ENCODE measurements at regions of chr17 and their contacts with region 1.

Region 1: DNA sequence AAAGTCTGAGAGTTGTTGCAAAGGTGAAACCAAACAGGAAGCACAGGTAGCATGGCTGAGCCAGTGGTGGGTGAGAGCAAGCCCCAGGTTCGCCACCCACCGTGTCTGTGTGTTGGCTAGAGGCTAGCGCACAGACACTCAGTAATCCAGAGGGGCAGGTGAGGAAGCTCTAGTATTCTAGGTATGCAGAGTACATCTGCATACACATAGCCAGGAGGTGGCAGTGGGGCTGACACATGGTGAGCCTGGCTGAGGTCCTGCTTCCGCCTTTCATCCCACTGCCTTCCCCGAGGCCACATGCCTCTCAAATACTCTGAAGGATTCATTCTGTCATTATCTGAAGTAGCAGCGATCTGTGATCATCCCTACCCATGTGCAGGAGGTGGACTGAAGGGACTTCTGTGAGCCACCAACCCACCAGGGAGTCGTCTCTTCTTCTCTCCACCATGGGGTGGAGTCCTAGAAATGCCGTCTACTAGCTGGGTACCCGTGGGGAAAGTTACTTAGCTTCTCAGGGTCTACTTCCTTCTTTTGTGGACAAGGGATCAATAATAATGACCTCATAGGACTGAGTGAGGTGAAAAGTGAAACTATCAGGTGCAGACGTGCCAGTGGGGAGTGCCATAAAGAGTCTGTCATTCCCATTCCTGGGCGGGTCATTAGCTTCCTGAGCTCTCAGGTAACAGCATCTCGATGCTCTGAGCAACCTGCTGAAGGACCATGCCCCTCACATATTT is 36.0 kb upstream of the ICAM2 start:
- DNase-seq: peak; percentile 65
- H3K4me3 Mint-ChIP-seq: peak overlapping the region; percentile 24
- H3K27ac Mint-ChIP-seq: peak overlapping the region; percentile 90
- H3K4me1 Mint-ChIP-seq: no peaks in the 10 kb centered on the region
- H3K27me3 Mint-ChIP-seq: no peaks in the 10 kb centered on the region
- CTCF ChIP-seq: peak; percentile 15

Region 2: DNA sequence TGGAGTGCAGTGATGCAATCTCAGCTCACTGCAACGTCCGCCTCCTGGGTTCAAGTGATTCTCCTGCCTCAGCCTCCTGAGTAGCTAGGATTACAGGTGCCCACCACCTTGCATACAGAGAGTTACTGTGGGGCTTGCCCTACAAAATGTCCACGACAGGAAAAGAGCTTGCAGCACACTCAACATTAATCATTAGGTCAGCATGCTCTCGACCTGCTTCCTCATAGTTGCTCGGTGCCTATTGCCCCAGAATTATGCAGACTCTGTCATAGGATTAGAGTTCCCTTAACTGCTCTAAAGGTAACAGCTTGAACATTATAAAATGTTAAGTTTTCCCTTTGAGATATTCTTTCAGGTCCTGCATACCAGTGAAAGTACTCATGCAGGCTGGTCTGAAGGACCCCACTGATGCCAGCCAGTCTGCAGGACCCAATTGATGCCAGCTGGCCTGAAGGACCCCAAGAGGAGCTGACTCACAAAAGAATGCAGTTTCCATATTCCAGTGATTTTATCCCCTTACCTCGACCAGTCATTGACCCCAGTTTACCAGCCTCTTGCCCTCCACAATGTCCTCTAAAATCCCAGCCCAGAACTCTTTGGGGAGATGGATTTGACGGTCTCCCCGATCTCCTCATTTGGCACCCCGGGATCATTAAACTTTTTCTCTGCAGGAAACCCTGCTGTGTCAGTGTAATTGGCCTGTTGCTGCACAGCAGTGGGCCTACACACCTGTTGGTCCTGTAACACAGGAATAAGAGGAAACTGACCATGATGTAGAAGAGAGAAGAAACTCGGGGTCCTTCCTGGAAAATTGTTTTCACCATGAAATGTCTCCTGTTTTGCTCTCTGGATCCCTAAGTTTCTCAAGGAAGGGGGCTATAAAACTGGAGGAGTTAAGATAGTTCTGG is 46.7 kb before region 1 on chr17:
- CTCF ChIA-PET with region 1: no interaction called
- intact Hi-C with region 1: no loop called
- DNase-seq: no peak
- H3K4me3 Mint-ChIP-seq: no peak overlapping the region
- H3K27ac Mint-ChIP-seq: no peak overlapping the region
- H3K4me1 Mint-ChIP-seq: peaks cover 29% of the 10 kb centered on the region
- H3K27me3 Mint-ChIP-seq: no peaks in the 10 kb centered on the region
- CTCF ChIP-seq: no peak

Region 3: DNA sequence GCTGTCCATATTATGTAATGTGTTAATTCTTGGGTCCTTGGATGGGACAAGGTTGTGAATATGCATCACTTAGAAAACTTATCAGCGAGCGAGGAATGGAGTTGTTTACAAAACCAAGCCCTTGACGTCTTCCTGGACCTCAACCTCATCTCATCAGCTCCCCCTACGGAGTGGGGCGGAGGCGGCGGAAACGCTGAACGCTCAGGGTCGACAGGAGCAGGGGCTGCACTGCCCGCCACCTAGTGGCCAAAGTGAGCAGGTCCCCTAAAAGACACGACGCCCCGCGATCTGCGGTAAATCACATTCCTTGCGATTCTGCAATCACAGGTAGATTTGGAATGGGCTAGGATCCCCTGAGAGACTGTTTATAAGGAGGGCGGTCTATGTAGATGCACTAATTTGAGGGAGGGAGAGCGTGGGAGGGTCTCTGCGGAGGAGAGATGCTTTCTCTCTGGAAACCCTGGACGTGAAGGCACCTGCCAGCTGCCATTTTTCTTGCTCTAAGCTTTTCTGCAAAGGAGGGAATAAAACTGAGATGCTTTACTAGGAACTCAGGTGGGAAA is 30.6 kb before region 1 on chr17:
- CTCF ChIA-PET with region 1: interaction called, 12 read pairs
- intact Hi-C with region 1: no loop called
- DNase-seq: peak; percentile 85
- H3K4me3 Mint-ChIP-seq: peak overlapping the region; percentile 74
- H3K27ac Mint-ChIP-seq: peak overlapping the region; percentile 19
- H3K4me1 Mint-ChIP-seq: peaks cover 8% of the 10 kb centered on the region
- H3K27me3 Mint-ChIP-seq: no peaks in the 10 kb centered on the region
- CTCF ChIP-seq: peak; percentile 92

Region 4: GRCh38 chr17:64073771-64074703 is 17.6 kb after region 1 on chr17:
- CTCF ChIA-PET with region 1: interaction called, 14 read pairs
- intact Hi-C with region 1: no loop called
- DNase-seq: no peak
- H3K4me3 Mint-ChIP-seq: peak overlapping the region; percentile 12
- H3K27ac Mint-ChIP-seq: peak overlapping the region; percentile 25
- H3K4me1 Mint-ChIP-seq: peaks cover 17% of the 10 kb centered on the region
- H3K27me3 Mint-ChIP-seq: no peaks in the 10 kb centered on the region
- CTCF ChIP-seq: no peak